ENCODE measurements at regions of chr14 and their contacts with region 1.

Region 1: DNA sequence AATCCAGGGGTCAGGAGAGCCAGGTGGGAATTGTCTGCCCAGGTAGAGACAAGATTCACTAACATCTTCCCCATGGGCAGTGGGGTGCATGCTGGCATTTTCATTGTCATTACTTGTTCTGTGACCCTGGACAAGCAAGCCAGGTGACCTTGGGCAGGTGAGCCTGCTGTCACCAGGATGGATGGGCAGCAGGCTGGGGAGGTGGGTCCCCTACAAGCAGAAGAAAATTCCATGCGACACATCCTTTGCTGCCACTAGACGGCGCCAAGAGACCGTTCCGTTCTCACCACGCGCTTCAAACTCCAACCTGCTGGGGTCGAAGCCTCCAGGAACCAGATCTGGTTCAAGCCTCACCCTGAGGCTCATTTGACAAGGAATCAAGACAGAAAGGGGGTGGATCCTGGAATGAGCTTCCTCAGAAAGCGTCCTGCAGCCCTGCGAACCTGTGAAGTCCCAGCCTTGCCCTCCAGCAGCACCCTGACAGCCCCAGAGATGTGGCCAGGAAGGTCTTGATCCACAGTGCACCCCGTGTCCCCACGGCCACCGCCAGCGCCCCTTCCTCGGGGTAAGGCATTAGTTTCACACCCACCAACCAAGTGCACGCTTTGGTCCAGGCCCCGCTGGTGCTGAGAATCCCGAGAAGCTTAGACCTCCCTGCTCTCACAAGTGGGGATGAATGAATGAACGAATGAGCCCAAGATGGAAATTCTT is 3.2 kb upstream of the DYNC1H1 start:
- H3K4me3 ChIP-seq: no peak overlapping the region
- H3K27ac ChIP-seq: no peak overlapping the region
- H3K4me1 ChIP-seq: peaks cover 11% of the 10 kb centered on the region
- CTCF ChIP-seq: peak; percentile 97

Region 2: DNA sequence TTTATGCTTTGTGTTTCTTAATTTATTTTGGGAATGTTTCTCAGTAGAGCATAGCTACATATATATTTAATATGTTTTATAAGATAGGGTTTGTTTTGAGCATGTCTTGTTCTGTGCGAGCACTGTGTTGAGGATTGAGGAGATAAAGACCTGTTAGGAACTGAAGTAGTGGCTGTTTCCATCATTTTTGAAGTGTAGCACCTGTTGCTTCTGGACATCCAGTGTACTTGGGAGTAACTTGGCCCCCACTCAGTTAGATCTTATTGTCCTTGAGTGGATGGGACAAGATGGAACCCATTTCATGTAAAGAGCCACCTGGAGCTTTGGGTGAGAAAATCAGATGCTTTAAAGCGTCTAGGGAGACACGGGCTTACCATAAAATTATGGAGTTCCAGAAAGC is 191.0 kb before region 1 on chr14:
- CTCF ChIA-PET with region 1: interaction called, 15 read pairs
- POLR2A ChIA-PET with region 1: no interaction called
- H3K4me3 ChIP-seq: no peak overlapping the region
- H3K27ac ChIP-seq: no peak overlapping the region
- H3K4me1 ChIP-seq: peaks cover 13% of the 10 kb centered on the region
- CTCF ChIP-seq: no peak

Region 3: DNA sequence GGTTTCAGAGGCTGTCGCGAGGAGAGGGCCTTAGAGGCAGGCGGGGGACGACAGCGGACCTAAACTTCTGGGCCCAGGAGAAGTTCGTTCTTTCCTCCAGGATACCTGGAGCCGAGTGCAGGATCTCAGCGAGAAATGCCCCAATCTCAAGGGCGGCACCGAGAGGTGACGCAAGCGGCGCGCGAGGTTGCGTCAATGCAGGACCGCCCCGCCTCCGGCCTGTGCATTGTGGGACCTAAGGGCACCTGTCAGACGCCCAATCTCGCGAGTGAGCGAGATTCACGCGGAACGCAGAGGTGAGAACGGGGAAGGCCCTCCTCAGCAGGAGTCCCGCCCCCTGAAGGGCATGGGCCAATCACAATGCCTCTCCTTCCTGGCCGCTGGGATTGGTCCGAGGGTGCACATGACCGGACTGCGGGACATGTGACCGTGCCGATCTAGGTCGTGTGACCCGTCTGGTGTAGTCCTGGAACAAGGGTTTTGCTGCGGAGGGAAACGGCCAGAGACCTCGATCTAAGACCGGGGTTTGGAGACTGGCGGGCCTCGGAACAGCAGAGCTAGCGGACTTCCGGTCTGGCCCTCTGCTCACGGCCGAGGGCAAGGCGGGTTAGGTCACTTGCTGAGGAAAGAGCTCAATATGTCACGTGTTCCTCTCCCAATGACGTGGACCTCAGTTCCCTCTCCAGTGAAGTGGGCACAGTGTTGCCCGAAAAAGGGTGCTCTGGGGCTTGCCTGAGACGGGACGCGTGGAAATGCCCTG is 13.1 kb before region 1 on chr14:
- CTCF ChIA-PET with region 1: interaction called, 11 read pairs
- POLR2A ChIA-PET with region 1: interaction called, 3 read pairs
- H3K4me3 ChIP-seq: peak overlapping the region; percentile 90
- H3K27ac ChIP-seq: peak overlapping the region; percentile 96
- H3K4me1 ChIP-seq: 0 out of 2 replicates have a peak, but pooled peaks cover 3% of the 10 kb centered on the region
- CTCF ChIP-seq: no peak

Region 4: DNA sequence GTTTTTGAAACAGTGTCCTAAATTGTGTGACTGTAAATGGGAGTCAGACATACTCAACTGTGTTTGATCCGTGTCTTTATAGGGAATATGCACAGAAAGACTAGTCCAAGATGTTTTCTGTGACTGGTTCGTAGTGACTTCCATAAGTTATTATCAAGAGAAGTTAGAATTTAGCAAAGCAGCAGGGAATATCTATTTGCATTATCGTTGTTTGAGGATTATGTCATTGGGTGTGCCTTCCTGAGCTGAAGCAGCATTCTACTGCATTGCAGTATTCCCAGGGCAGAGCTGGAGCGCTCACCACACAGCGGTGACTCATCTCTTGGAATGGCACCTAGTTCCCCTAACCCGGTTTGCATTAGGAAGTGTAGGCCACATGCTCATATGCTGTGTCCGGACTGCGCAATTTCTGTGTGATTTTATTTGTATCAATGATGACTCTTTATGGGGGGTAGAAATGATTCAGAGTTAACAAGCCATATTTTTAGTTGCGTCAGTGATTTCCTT is 11.2 kb after region 1 on chr14:
- CTCF ChIA-PET with region 1: interaction called, 13 read pairs
- POLR2A ChIA-PET with region 1: no interaction called
- H3K4me3 ChIP-seq: no peak overlapping the region
- H3K27ac ChIP-seq: no peak overlapping the region
- H3K4me1 ChIP-seq: peaks cover 4% of the 10 kb centered on the region; the same call in 1 of the 2 replicates
- CTCF ChIP-seq: no peak

Region 5: DNA sequence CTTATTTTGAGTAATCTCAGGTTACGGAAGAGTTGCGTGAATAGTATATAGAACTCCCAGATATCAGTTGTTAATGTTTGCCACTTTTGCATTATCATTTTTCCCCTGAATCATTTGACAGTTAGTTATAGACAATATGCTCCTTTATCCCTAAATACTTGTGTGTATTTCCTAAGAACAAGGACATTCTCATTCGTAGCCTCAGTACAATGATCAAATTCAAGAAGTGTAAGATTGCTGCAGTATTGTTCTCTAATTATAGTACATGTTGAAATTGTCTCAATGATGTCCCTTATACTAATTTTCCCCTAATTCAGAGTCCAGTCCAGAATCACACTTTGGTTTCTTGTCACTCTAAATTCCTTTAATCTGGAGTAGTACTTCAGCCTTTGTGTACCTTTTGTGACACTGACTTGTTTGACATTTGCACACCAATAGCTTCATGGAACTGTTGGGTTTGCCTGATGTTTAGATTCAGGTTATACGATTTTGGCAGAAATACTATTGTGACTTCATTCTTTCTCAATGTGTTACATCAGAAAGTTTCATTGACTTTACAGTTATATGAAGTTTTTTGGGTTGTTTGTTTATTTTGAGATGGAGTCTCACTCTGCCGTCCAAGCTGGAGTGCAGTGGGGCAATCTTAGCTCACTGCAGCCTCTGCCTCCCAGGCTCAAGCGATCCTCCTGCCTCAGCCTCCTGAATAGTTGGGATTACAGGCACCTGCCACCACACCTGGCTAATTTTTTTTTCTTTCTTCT is 16.3 kb after region 1 on chr14:
- CTCF ChIA-PET with region 1: interaction called, 13 read pairs
- POLR2A ChIA-PET with region 1: no interaction called
- H3K4me3 ChIP-seq: no peak overlapping the region
- H3K27ac ChIP-seq: no peak overlapping the region
- H3K4me1 ChIP-seq: 0 out of 2 replicates have a peak, but pooled peaks cover 4% of the 10 kb centered on the region
- CTCF ChIP-seq: no peak

Region 6: DNA sequence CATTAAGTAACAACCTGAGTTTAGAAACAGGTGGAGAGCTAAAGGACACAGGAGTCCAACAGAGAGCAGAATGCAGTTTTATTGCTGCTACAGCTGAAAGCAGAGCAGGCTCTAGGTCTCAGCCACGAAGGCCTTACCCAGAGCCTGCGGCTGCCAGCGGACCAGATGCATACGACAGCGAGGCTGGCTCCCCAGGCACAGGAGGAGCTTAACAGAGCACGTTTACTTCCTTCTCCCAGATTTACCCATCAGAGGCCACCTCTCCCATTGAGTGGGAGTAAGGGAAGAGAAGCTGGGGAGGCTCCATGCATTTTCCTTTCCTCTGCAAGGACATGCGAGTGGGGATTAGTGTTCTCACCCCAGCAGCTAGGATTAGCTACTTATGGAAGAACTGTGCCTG is 25.8 kb after region 1 on chr14:
- CTCF ChIA-PET with region 1: interaction called, 15 read pairs
- POLR2A ChIA-PET with region 1: no interaction called
- H3K4me3 ChIP-seq: no peak overlapping the region
- H3K27ac ChIP-seq: no peak overlapping the region
- H3K4me1 ChIP-seq: no peaks in the 10 kb centered on the region
- CTCF ChIP-seq: no peak

Region 7: DNA sequence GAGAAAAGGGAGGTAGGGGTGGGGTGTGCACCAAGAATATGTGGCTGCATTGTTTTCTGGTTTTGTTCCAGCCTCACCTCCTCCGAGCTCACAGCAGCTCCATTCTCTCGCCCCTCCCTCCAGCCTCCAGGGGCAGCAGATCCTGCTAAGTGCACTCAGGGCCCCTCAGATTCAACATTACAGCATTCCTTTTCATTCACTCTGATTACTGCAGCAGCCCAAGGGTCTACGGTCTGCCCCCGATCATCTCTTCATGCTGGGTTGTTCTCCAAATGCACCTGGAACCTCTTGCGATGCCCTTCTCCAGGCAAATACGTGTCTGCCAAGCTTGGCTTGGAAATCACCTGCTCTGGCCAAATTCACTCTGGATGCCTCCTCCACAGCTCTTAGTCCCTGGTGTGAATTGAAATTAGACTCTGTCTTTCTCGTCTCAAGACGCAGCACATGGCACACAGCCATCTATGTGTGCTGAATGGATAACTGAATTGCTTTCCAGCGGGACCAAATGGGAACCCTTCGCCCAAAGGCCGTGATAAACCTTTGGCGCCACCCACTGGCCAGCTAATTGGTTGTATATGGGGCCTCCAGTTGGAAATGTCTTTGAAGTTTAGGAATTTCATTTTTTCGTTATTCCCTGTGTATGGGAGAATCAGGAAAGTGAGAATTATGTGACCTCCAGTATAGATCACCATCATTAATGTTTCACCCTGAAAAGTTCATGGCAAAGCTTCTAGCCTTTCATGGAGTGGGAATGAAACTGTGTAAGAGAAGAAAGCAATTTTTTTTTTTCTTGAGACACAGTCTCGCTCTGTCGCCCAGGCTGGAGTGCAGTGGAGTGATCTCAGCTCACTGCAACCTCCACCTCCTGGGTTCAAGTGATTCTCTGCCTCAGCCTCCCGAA is 135.3 kb after region 1 on chr14:
- CTCF ChIA-PET with region 1: interaction called, 10 read pairs
- POLR2A ChIA-PET with region 1: no interaction called
- H3K4me3 ChIP-seq: no peak overlapping the region
- H3K27ac ChIP-seq: no peak overlapping the region
- H3K4me1 ChIP-seq: no peaks in the 10 kb centered on the region
- CTCF ChIP-seq: peak; percentile 45

Region 8: DNA sequence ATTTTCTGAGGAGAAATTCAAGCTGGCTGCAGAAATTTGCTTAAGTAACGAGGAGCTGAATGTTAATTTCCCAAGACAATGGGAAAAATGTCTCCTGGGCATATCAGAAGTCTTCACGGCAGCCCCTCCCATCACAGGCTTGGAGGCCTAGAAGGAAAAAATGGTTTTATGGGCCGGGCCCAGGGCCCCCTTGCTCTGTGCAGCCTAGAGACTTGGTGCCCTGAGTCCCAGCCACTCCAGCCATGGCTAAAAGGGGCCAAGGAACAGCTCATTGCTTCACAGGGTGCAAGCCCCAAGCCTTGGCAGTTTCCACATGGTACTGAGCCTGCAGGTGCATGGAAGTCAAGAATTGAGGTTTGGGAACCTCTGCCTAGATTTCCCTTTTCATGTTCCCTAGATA is 149.9 kb after region 1 on chr14:
- CTCF ChIA-PET with region 1: no interaction called
- POLR2A ChIA-PET with region 1: no interaction called
- H3K4me3 ChIP-seq: no peak overlapping the region
- H3K27ac ChIP-seq: no peak overlapping the region
- H3K4me1 ChIP-seq: no peaks in the 10 kb centered on the region
- CTCF ChIP-seq: no peak